Breast epithelium (tissue), 4 donors: ENCODE measurements at regions of chr1 and their contacts with region 1.

Region 1: GRCh38 chr1:150429805-150430204 is 57.4 kb upstream of the TARS2 start:
- DNase-seq: no peak
- H3K4me3 ChIP-seq: no peak overlapping the region
- H3K27ac ChIP-seq: no peak overlapping the region
- H3K4me1 ChIP-seq: no peaks in the 10 kb centered on the region
- H3K27me3 ChIP-seq: no peaks in the 10 kb centered on the region
- CTCF ChIP-seq: no peak
- POLR2A ChIP-seq: no peak

Region 2: GRCh38 chr1:150410582-150411101 is 19.2 kb before region 1 on chr1:
- intact Hi-C with region 1: no loop called
- DNase-seq: no peak
- H3K4me3 ChIP-seq: no peak overlapping the region
- H3K27ac ChIP-seq: no peak overlapping the region
- H3K4me1 ChIP-seq: no peaks in the 10 kb centered on the region
- H3K27me3 ChIP-seq: no peaks in the 10 kb centered on the region
- CTCF ChIP-seq: no peak
- POLR2A ChIP-seq: no peak

Region 3: GRCh38 chr1:150543500-150544141 is 113.8 kb after region 1 on chr1:
- intact Hi-C with region 1: loop called (anchors 5 kb)
- DNase-seq: no peak
- H3K4me3 ChIP-seq: no peak overlapping the region
- H3K27ac ChIP-seq: no peak overlapping the region
- H3K4me1 ChIP-seq: peaks cover 0 to 1% of the 10 kb centered on the region in 2 donors
- H3K27me3 ChIP-seq: no peaks in the 10 kb centered on the region
- CTCF ChIP-seq: no peak
- POLR2A ChIP-seq: no peak